Activated CD4-positive, alpha-beta T cell treated with anti-CD3 and anti-CD28 coated beads for 36 hours (primary cell): ENCODE measurements at regions of chr22 and their contacts with region 1.

Region 1: GRCh38 chr22:40094485-40094884 is 83.2 kb upstream of the TNRC6B start:
- DNase-seq: no peak
- ATAC-seq: peak; percentile 66
- H3K4me3 Mint-ChIP-seq: peak overlapping the region; percentile 57
- H3K27ac Mint-ChIP-seq: peak overlapping the region; percentile 70
- H3K4me1 Mint-ChIP-seq: peaks cover 72% of the 10 kb centered on the region
- H3K27me3 Mint-ChIP-seq: no peaks in the 10 kb centered on the region

Region 2: DNA sequence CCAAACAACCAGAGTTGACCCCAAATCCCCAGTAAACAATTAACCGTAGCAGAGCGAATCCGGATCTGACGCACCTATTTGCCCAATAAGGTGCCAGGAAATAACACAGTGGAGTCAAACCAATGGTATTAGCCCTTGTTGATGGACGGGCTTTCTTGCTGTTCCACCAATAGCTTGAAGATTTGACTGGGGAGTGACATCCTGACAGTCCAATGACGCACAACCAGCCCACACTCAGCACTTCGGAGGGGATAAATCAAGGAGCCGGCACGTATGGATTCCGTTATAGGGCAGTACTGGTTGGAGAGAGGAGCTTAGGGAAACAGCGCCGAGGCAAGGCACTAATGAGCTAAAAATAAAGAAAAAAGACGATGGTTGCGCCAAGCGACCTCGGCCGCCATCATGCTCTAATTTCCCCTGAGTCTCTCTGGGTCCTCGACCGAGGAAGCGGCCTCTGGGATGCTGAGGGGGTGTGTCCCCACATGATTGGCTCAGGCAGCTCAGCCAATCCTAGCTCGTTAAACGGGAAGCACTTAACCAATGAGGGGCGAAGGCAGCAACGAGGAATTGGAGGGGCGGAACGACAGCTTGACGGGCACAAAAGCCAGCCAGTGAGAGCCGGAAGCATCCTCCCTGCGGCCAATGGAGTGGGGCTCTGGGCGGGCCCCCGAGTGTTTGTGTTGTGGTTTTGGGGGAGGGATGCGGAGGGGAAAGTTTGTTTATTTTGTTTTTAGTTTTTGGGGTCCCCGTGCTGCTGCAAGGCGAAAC is 50.2 kb before region 1 on chr22:
- CTCF ChIA-PET with region 1: no interaction called
- POLR2A ChIA-PET with region 1: no interaction called
- intact Hi-C with region 1: no loop called
- DNase-seq: peak; percentile 98
- ATAC-seq: peak; percentile 91
- H3K4me3 Mint-ChIP-seq: peak overlapping the region; percentile 87
- H3K27ac Mint-ChIP-seq: peak overlapping the region; percentile 99
- H3K4me1 Mint-ChIP-seq: peaks cover 24% of the 10 kb centered on the region
- H3K27me3 Mint-ChIP-seq: peaks cover 2% of the 10 kb centered on the region

Region 3: GRCh38 chr22:40107851-40108378 is 13.4 kb after region 1 on chr22:
- CTCF ChIA-PET with region 1: interaction called, 15 read pairs
- POLR2A ChIA-PET with region 1: no interaction called
- intact Hi-C with region 1: no loop called
- DNase-seq: peak; percentile 65
- ATAC-seq: peak; percentile 88
- H3K4me3 Mint-ChIP-seq: peak overlapping the region; percentile 68
- H3K27ac Mint-ChIP-seq: peak overlapping the region; percentile 91
- H3K4me1 Mint-ChIP-seq: peaks cover 80% of the 10 kb centered on the region
- H3K27me3 Mint-ChIP-seq: no peaks in the 10 kb centered on the region